ENCODE measurements at regions of chr3 and their contacts with region 1.

Region 1: DNA sequence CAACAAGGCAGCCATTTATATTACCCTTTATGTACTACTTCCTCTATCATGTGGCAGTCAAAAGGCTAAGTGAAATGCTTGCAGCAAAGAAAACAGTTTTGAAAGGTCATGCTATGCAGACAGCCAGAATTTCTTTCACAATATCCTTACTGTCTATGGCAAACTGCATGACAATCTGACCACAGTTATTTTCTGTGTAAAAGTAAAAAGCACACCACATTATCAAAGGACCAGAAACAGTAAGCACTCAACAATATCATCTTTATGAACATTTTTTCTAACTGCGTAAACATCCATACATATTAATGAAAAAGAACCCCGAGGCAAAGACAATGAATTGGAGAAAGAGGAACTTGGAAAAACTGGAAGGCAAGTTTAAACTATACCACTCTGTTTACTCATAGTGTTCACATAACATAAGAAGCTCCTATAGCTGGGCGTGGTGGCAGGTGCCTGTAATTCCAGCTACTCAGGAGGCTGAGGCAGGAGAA is 47.9 kb downstream of the PIK3CB start:
- DNase-seq: no peak
- H3K4me3 ChIP-seq: no peak overlapping the region
- H3K27ac ChIP-seq: no peak overlapping the region
- H3K4me1 ChIP-seq: no peaks in the 10 kb centered on the region
- H3K27me3 ChIP-seq: no peaks in the 10 kb centered on the region
- CTCF ChIP-seq: no peak
- POLR2A ChIP-seq: no peak

Region 2: DNA sequence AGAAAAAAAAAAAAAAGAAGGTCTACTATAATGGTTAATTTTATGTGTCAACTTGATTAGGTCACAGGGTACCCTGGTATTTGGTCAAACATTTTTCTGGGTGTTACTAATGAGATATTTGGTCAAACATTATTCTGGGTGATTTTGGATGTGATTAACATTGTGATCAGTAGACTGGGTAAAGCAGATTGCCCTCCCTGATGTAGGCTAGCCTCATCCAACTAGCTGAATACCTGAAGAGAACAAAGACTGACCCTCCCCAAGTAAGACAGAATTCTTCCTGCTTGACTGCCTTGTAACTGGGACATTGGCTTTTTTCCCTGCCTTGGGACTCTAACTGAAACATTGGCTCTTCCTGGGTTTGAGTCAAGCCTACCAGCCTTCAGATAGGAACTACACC is 57.6 kb before region 1 on chr3:
- CTCF ChIA-PET with region 1: no interaction called
- POLR2A ChIA-PET with region 1: no interaction called
- dilution Hi-C with region 1: no loop called
- intact Hi-C with region 1: no loop called
- DNase-seq: no peak
- H3K4me3 ChIP-seq: no peak overlapping the region
- H3K27ac ChIP-seq: no peak overlapping the region
- H3K4me1 ChIP-seq: peaks cover 2% of the 10 kb centered on the region
- H3K27me3 ChIP-seq: no peaks in the 10 kb centered on the region
- CTCF ChIP-seq: no peak
- POLR2A ChIP-seq: no peak

Region 3: DNA sequence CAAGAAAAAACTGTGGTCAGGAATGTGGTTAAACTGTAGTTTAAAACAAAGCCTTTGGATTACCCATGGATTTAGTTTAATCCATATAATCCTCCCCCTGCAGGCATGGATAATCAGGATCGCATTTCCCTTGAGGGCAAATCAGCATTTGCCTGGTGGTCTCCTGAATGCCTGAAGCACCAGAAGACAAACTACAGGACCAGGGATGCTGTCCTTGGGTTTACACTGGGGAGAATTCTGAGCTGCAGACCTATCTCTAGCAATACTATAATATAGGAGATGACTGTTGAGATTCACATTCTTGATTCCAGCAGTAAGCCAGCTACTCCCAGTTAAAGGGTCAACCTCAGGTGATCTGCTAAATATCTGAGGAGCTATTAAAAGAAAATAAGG is 37.3 kb after region 1 on chr3:
- CTCF ChIA-PET with region 1: interaction called, 3 read pairs
- POLR2A ChIA-PET with region 1: no interaction called
- dilution Hi-C with region 1: no loop called
- intact Hi-C with region 1: loop called (anchors 5 kb)
- DNase-seq: no peak
- H3K4me3 ChIP-seq: no peak overlapping the region
- H3K27ac ChIP-seq: peak overlapping the region; percentile 71
- H3K4me1 ChIP-seq: peaks cover 10% of the 10 kb centered on the region
- H3K27me3 ChIP-seq: no peaks in the 10 kb centered on the region
- CTCF ChIP-seq: no peak
- POLR2A ChIP-seq: no peak

Region 4: GRCh38 chr3:139642996-139643395 is 856.2 kb after region 1 on chr3:
- CTCF ChIA-PET with region 1: no interaction called
- POLR2A ChIA-PET with region 1: no interaction called
- dilution Hi-C with region 1: no loop called
- intact Hi-C with region 1: no loop called
- DNase-seq: no peak
- H3K4me3 ChIP-seq: no peak overlapping the region
- H3K27ac ChIP-seq: no peak overlapping the region
- H3K4me1 ChIP-seq: no peaks in the 10 kb centered on the region
- H3K27me3 ChIP-seq: no peaks in the 10 kb centered on the region
- CTCF ChIP-seq: no peak
- POLR2A ChIP-seq: no peak